Right ventricle myocardium inferior (tissue), 1 donor: ENCODE measurements at regions of chr11 and their contacts with region 1.

Region 1: DNA sequence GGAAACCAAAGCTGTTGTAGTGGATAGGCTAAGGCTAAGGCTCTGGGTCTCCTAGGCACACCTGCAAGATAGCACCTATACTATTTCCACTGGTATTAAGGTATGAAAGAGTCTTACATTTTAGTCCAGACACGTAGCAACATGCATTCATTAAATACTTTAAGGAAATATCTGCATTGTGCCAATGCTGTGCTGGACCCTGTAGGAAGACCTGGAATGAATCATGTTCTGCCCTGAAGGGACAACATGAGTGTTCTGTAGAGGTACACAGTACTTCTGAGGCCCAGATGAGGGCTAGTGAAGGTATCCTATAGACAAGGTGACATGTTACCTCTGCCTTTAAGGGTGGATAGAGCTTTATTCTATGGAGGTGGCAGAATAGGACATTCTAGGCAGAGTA is 35.2 kb upstream of the RRM1 start:
- DNase-seq: no peak
- ATAC-seq: no peak

Region 2: DNA sequence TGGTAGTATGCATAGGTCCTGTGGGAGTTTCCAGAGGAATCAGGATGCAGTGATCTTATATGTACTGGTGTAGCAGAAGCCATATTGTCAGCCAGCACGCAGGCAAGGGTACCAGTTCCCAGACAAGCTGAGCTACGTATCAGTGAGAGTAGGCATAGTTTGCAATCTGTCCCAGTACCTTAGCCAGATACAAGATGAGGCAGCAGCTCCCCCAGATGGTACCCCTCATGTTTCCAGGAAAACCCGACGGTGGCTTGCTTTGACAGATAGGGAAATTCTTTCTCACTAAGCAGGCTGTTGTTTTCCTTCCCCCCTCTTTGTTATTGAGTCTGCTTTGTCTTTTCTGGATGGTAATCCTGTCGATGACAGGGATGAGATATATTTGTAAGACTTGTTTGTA is 74.5 kb before region 1 on chr11:
- intact Hi-C with region 1: loop called (anchors 5 kb)
- DNase-seq: no peak
- ATAC-seq: no peak

Region 3: DNA sequence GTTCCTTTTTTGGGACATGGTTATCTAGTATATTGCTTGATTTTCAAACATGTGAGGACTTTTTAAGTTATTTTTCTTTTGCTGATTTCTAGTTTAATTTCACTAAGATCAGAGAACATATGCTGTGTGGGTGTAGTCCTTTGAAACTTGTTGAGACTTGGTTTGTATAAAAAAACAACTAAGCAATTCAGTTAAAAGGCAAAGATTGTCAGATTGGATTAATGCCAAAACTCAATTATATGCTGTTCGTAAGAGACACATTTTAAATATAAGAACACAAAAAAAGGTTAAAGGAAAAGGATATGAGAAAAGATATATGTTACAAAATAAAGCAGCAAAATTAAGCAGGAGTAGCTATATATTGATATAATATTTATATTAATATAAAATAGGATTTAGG is 17.3 kb after region 1 on chr11:
- intact Hi-C with region 1: no loop called
- DNase-seq: no peak
- ATAC-seq: no peak